ENCODE measurements at regions of chr3 and their contacts with region 1.

Region 1: GRCh38 chr3:36957862-36958686 is 13.2 kb upstream of the TRANK1 start:
- DNase-seq: no peak
- ATAC-seq: no peak
- H3K4me3 Mint-ChIP-seq: peak overlapping the region; percentile 4
- H3K27ac Mint-ChIP-seq: no peak overlapping the region
- H3K4me1 Mint-ChIP-seq: peaks cover 21% of the 10 kb centered on the region
- H3K27me3 Mint-ChIP-seq: no peaks in the 10 kb centered on the region
- CTCF ChIP-seq: no peak

Region 2: DNA sequence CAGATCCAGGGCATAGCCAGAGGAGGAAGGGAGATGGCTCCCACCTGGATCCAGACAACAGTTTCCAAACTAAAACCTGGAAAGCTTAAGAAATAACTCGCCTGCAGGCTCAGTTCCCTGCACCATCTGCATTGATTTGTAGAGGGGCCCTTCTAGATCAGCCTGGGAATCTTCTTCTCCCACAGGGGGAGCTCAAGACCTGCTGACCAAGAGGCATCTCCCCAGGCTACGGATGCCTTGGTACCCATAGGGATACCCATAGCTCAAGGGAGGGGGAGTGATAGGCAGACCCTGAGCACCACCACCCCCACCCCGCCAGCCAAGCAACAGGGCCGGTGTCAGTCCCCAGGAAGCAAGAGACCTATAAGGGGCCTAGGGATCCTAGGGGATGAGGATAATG is 165.7 kb before region 1 on chr3:
- CTCF ChIA-PET with region 1: interaction called, 22 read pairs
- POLR2A ChIA-PET with region 1: no interaction called
- intact Hi-C with region 1: loop called (anchors 10 kb)
- DNase-seq: peak; percentile 34
- ATAC-seq: peak; percentile 42
- H3K4me3 Mint-ChIP-seq: no peak overlapping the region
- H3K27ac Mint-ChIP-seq: no peak overlapping the region
- H3K4me1 Mint-ChIP-seq: no peaks in the 10 kb centered on the region
- H3K27me3 Mint-ChIP-seq: no peaks in the 10 kb centered on the region
- CTCF ChIP-seq: no peak

Region 3: DNA sequence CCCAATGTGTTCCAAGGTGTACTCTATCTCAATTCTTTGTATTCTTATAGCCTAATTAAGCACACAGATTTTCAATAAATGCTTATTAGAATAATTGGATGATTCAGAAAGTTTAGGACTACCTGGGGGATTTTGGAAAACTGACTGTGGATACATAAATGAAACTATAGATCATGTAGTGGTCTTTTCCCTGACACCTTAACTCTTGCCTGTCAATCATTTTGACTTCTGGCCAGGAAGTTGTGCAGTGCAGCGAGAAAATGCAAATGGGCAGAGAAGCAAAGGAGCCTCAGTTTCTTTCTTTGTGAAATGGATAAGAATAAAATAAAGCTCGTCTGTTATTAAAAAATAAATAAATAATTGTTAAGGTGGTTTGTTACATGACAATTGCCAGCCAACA is 146.3 kb before region 1 on chr3:
- CTCF ChIA-PET with region 1: no interaction called
- POLR2A ChIA-PET with region 1: no interaction called
- intact Hi-C with region 1: no loop called
- DNase-seq: no peak
- ATAC-seq: no peak
- H3K4me3 Mint-ChIP-seq: no peak overlapping the region
- H3K27ac Mint-ChIP-seq: no peak overlapping the region
- H3K4me1 Mint-ChIP-seq: no peaks in the 10 kb centered on the region
- H3K27me3 Mint-ChIP-seq: no peaks in the 10 kb centered on the region
- CTCF ChIP-seq: no peak

Region 4: GRCh38 chr3:36876181-36876936 is 81.7 kb before region 1 on chr3:
- CTCF ChIA-PET with region 1: interaction called, 33 read pairs
- POLR2A ChIA-PET with region 1: no interaction called
- intact Hi-C with region 1: no loop called
- DNase-seq: peak; percentile 20
- ATAC-seq: peak; percentile 94
- H3K4me3 Mint-ChIP-seq: peak overlapping the region; percentile 62
- H3K27ac Mint-ChIP-seq: peak overlapping the region; percentile 75
- H3K4me1 Mint-ChIP-seq: peaks cover 40% of the 10 kb centered on the region
- H3K27me3 Mint-ChIP-seq: no peaks in the 10 kb centered on the region
- CTCF ChIP-seq: no peak

Region 5: DNA sequence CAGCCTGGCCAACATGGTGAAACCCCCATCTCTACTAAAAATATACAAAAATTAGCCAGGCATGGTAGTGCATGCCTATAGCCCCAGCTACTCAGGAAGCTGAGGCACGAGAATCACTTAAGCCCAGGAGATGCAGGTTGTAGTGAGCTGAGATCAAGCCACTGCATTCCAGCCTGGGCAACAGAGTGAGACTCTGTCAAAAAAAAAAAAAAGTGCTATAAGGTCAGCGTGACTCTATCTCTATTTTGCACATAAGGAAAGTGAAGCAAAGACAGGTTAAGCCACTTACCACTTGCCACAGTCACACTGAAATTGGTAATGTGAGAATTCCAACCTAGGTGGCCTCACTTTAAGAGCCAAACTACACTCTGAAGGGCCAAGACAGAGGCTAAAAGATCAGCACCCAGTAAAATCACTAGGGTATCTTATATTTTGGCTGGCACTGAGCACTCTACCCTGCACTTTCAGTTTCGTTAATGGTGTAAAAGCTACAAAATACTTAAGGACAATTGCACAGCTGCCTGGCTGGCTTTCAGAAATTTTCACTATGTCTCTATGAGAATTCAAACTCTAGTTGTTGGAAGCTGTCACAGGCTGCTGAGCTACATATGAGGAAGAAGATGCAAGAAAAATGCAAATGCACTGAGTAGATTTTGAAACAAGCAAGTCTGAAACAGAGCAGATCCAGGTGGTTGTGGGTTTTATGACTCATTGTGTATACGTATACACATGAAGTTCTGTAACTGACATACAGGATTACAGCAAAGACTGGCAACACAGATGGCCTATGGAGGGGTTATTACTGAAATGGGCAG is 45.9 kb before region 1 on chr3:
- CTCF ChIA-PET with region 1: interaction called, 49 read pairs
- POLR2A ChIA-PET with region 1: no interaction called
- intact Hi-C with region 1: loop called (anchors 5 kb)
- DNase-seq: peak; percentile 58
- ATAC-seq: peak; percentile 78
- H3K4me3 Mint-ChIP-seq: peak overlapping the region; percentile 62
- H3K27ac Mint-ChIP-seq: peak overlapping the region; percentile 89
- H3K4me1 Mint-ChIP-seq: peaks cover 34% of the 10 kb centered on the region
- H3K27me3 Mint-ChIP-seq: no peaks in the 10 kb centered on the region
- CTCF ChIP-seq: no peak

Region 6: GRCh38 chr3:36969540-36970432 is 11.7 kb after region 1 on chr3:
- CTCF ChIA-PET with region 1: interaction called, 29 read pairs
- POLR2A ChIA-PET with region 1: interaction called, 3 read pairs
- intact Hi-C with region 1: no loop called
- DNase-seq: peak; percentile 78
- ATAC-seq: peak; percentile 99
- H3K4me3 Mint-ChIP-seq: no peak overlapping the region
- H3K27ac Mint-ChIP-seq: peak overlapping the region; percentile 79
- H3K4me1 Mint-ChIP-seq: peaks cover 22% of the 10 kb centered on the region
- H3K27me3 Mint-ChIP-seq: no peaks in the 10 kb centered on the region
- CTCF ChIP-seq: no peak

Measured in activated CD8-positive, alpha-beta T cell treated with anti-CD3 and anti-CD28 coated beads for 36 hours (primary cell).